B cell (primary cell): ENCODE measurements at regions of chr19 and their contacts with region 1.

Region 1: GRCh38 chr19:35740423-35741202 is 1.6 kb downstream of the IGFLR1 start:
- DNase-seq: peak; percentile 95
- ATAC-seq: peak; percentile 64
- H3K4me3 ChIP-seq: peak overlapping the region; percentile 60 to 93 (median 83)
- H3K4me3 Mint-ChIP-seq: peak overlapping the region; percentile 96
- H3K27ac ChIP-seq: peak overlapping the region; percentile 59 to 73
- H3K27ac Mint-ChIP-seq: peak overlapping the region; percentile 92
- H3K4me1 ChIP-seq: peaks cover 34 to 64% of the 10 kb centered on the region in 2 donors
- H3K4me1 Mint-ChIP-seq: peaks cover 57% of the 10 kb centered on the region
- H3K27me3 ChIP-seq: no peaks in the 10 kb centered on the region
- H3K27me3 Mint-ChIP-seq: no peaks in the 10 kb centered on the region
- CTCF ChIP-seq: no peak

Region 2: GRCh38 chr19:35702223-35703012 is 38.2 kb before region 1 on chr19:
- CTCF ChIA-PET with region 1: interaction called, 4 read pairs
- POLR2A ChIA-PET with region 1: interaction called, 8 read pairs
- intact Hi-C with region 1: loop called (anchors 1 kb)
- DNase-seq: peak; percentile 96
- ATAC-seq: peak; percentile 99
- H3K4me3 ChIP-seq: peak overlapping the region in 4 of 5 experiments; percentile 61 to 86 (median 74)
- H3K4me3 Mint-ChIP-seq: peak overlapping the region; percentile 98
- H3K27ac ChIP-seq: peak overlapping the region; percentile 59 to 74
- H3K27ac Mint-ChIP-seq: peak overlapping the region; percentile 98
- H3K4me1 ChIP-seq: peaks cover 0 to 19% of the 10 kb centered on the region in 2 donors
- H3K4me1 Mint-ChIP-seq: peaks cover 8% of the 10 kb centered on the region
- H3K27me3 ChIP-seq: no peaks in the 10 kb centered on the region
- H3K27me3 Mint-ChIP-seq: no peaks in the 10 kb centered on the region
- CTCF ChIP-seq: no peak

Region 3: DNA sequence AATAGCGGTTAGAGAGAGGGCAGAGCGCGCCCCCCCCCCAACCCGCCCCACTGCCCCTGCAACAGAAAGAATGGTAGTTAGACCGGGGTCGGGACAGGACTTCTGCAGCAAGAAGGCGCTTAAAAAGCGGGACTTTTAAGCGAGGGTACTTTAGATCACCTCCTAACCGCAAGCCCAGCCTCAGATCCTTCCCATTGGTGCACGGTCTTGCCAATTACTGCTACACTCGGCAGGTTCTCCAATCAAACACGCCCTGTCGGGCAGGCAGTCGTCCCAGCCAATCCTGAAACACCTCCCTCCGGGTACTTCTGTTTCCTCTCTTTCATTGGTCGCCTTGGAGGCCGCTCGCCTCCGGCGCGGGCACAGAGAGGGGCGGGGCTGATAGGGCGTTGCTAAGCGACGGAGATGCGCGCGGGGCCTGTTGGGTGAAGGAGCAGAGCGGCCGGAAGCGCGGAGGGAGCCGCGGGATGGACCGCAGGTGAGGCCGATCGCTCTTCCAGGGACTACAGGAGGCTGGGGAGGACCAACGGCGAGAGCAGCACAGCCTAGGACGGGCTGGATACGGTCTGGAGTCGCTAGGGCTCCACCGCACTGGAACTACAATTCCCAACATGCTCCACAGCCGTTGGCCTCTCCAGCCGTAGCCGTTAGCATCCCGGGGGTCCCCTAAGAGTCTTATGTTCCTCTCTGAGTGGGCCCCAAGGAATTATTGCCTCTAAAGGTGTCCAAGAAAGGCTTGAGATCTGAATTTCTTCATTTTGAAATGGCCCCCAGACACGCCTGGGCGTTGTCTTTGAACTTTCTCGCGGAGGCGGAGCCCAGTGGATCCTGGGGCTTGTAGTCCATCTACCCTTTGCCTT is 17.4 kb after region 1 on chr19 and contains the start of gene PROSER3:
- CTCF ChIA-PET with region 1: interaction called, 3 read pairs
- POLR2A ChIA-PET with region 1: interaction called, 17 read pairs
- intact Hi-C with region 1: loop called (anchors 1 kb)
- DNase-seq: peak; percentile 99
- ATAC-seq: peak; percentile 95
- H3K4me3 ChIP-seq: peak within 1 kb of the TSS; percentile 85 to 99 (median 94)
- H3K4me3 Mint-ChIP-seq: peak within 1 kb of the TSS; percentile 99
- H3K27ac ChIP-seq: peak within 1 kb of the TSS; percentile 91 to 96
- H3K27ac Mint-ChIP-seq: peak within 1 kb of the TSS; percentile 99
- H3K4me1 ChIP-seq: peaks cover 24 to 35% of the 10 kb centered on the region in 2 donors
- H3K4me1 Mint-ChIP-seq: peaks cover 34% of the 10 kb centered on the region
- H3K27me3 ChIP-seq: peaks cover 0 to 26% (median 10%) of the 10 kb centered on the region in 4 experiments
- H3K27me3 Mint-ChIP-seq: peaks cover 17% of the 10 kb centered on the region
- CTCF ChIP-seq: no peak
- total RNA-seq, gene PROSER3: 61.0 and 65.6 TPM in 2 replicates

Region 4: DNA sequence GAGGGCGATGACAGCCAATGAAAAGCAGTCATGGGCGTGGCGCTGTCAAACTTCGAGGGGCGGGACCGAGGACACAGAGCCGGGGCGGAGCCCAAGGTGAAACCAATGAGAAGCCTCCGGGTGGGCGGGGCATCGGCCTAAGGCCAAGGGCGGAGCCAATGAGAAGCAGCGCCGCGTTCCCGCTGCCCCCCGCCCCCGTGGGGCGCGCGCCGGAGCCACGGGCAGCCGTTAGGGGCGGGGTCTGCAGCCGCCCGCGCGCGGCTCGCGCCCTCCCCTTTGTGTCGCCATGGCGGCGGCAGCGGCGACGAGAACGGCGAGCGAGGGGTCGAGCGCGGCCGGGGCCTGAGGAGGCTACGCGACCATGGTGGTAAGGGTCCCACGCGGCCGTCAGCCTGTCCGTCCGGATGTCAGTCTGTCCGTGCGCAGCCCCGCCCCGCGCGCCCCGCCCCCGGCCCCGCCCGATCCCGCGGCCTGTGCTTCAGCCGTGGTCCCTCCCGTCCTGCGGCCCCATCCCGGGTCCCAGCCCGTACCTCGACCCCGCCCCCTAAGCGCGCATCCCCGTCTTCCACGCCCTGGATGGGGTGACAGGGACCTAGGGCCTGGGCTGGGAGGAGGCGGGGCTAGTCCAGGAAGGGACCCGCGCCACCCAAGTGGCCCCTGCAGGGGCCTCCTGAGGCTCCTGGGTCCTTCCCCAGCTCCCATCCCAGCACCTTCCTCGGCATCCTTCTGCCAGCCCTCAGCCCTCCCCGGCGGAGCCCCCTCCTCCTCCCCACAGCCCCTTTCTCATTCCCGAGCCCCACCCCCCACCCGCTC is 34.9 kb after region 1 on chr19 and contains the start of gene ARHGAP33:
- CTCF ChIA-PET with region 1: no interaction called
- POLR2A ChIA-PET with region 1: no interaction called
- intact Hi-C with region 1: loop called (anchors 1 kb)
- DNase-seq: peak; percentile 99
- ATAC-seq: peak; percentile 99
- H3K4me3 ChIP-seq: peak within 1 kb of the TSS; percentile 26 to 68 (median 58)
- H3K4me3 Mint-ChIP-seq: peak within 1 kb of the TSS; percentile 86
- H3K27ac ChIP-seq: peak within 1 kb of the TSS in 1 of 2 donors; percentile 19
- H3K27ac Mint-ChIP-seq: peak within 1 kb of the TSS; percentile 43
- H3K4me1 ChIP-seq: peaks cover 10 to 16% of the 10 kb centered on the region in 2 donors
- H3K4me1 Mint-ChIP-seq: peaks cover 10% of the 10 kb centered on the region
- H3K27me3 ChIP-seq: no peaks in the 10 kb centered on the region
- H3K27me3 Mint-ChIP-seq: no peaks in the 10 kb centered on the region
- CTCF ChIP-seq: no peak
- total RNA-seq, gene ARHGAP33: 18.2 and 21.6 TPM in 2 replicates

Region 5: DNA sequence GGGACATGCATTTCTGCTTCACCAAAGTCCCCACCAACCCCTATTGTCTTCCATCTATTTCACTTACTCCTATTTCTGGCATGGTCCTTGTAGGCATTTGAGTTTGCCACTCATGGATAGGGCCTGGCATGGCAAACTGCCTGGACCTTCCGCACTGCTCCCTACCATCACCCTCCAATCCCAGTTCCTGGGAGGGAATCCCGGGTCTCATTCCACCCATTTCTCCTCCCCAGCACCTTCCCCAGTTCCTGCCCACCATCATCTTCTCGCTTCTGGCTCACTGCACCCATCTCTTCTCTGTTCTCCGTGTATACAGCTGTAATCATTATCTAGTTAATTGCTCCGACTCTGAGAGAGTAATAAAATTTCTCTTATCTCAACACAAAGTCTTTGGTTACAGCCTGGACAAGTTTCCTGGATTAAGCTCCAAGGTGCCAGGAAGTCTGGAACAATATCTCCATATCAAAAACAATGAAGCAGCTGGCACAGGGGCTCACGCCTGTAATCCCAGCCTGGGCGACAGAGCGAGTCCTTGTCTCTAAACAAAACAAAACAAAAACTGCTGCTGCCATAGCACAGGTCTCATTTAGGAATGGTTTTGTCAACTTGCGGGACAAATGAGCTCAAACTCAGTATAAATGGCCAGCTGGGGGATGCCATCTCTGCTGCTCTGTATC is 428.6 kb after region 1 on chr19:
- CTCF ChIA-PET with region 1: no interaction called
- POLR2A ChIA-PET with region 1: interaction called, 10 read pairs
- intact Hi-C with region 1: no loop called
- DNase-seq: no peak
- ATAC-seq: no peak
- H3K4me3 ChIP-seq: no peak overlapping the region
- H3K4me3 Mint-ChIP-seq: no peak overlapping the region
- H3K27ac ChIP-seq: no peak overlapping the region
- H3K27ac Mint-ChIP-seq: no peak overlapping the region
- H3K4me1 ChIP-seq: peaks cover 0 to 4% of the 10 kb centered on the region in 2 donors
- H3K4me1 Mint-ChIP-seq: peaks cover 4% of the 10 kb centered on the region
- H3K27me3 ChIP-seq: no peaks in the 10 kb centered on the region
- H3K27me3 Mint-ChIP-seq: no peaks in the 10 kb centered on the region
- CTCF ChIP-seq: no peak